Right ventricle myocardium inferior (tissue), 1 donor: ENCODE measurements at regions of chr1 and their contacts with region 1.

Region 1: DNA sequence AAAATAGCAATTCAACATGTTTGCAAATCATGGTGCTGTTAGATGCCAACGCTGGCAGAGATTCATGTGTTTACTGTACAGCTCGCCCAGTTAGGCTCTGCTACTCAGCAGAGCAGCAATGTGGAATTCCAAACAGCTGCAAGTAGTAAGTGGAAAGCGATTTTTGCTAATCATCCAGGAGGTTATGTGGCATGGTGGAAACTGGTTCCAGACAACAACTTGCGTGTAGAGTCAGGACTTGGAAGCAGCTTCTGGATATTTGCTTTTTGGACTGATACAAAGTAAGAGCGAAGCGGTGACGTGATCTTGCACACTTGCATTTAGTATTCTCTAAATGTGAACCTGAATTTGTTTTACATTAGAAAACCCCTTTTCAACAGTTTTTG is 27.1 kb upstream of the HHAT start:
- DNase-seq: no peak
- ATAC-seq: no peak

Region 2: GRCh38 chr1:209860293-209860881 is 441.2 kb before region 1 on chr1:
- intact Hi-C with region 1: loop called (anchors 10 kb)
- DNase-seq: peak; percentile 81
- ATAC-seq: peak; percentile 59

Region 3: GRCh38 chr1:210516092-210516656 is 214.6 kb after region 1 on chr1:
- intact Hi-C with region 1: no loop called
- DNase-seq: no peak
- ATAC-seq: no peak